Sciatic nerve (tissue), 2 donors: ENCODE measurements at regions of chr3 and their contacts with region 1.

Region 1: DNA sequence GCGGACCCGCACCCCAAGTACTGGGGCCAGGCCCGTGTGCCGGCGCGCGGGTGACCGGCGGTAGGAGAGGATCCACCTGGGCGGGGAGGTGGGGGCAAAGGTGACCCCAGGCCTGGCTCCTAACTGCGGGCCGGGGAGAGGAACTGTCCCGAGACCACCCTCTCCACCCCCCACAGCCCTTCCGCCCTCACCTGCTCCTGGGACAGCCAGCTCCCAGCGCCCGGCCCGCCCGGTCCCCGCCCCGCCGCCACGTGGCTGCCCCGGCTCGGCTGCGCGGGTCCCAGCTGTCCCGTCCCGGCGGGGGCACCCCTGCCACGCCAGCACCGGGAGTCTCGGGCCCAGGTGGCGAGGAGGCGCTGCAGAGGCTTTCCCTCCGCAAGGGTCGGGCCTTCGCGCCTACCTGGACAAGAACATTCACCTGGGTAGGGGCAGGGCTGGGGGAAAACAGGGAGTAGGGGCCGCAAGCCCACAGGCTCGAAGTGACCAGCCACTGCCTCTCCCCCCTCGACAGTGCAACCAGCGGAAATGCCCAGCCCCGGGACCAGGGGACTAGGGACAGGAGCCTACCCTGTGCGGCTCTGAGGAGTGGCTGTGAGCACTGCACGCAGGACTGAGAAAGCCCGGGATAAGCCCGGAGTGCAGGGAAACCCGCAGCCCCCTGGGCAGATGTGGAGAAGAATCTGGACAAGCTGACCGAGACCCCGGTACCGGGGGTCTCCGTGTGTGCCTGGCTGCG is at the start of gene SLC12A8:
- DNase-seq: no peak
- ATAC-seq: no peak
- total RNA-seq, gene SLC12A8: 2.5 TPM

Region 2: GRCh38 chr3:126365351-126366277 is 1152.9 kb after region 1 on chr3:
- intact Hi-C with region 1: loop called (anchors 5 kb)
- DNase-seq: peak; percentile 41
- ATAC-seq: peak; percentile 27

Region 3: GRCh38 chr3:127011270-127011992 is 1798.8 kb after region 1 on chr3:
- intact Hi-C with region 1: no loop called
- DNase-seq: no peak
- ATAC-seq: peak; percentile 55